ENCODE measurements at regions of chr13 and their contacts with region 1.

Region 1: GRCh38 chr13:98576963-98577822 is at the start of gene STK24:
- DNase-seq: peak; percentile 73 to 92 (median 91)
- ATAC-seq: peak; percentile 82 to 91
- H3K4me3 ChIP-seq: peak within 1 kb of the TSS; percentile 77
- H3K27ac ChIP-seq: peak within 1 kb of the TSS; percentile 99
- H3K4me1 ChIP-seq: peaks cover 2% of the 10 kb centered on the region
- H3K27me3 ChIP-seq: no peaks in the 10 kb centered on the region
- total RNA-seq, gene STK24: 60.5 to 66.9 (median 62.7) TPM

Region 2: DNA sequence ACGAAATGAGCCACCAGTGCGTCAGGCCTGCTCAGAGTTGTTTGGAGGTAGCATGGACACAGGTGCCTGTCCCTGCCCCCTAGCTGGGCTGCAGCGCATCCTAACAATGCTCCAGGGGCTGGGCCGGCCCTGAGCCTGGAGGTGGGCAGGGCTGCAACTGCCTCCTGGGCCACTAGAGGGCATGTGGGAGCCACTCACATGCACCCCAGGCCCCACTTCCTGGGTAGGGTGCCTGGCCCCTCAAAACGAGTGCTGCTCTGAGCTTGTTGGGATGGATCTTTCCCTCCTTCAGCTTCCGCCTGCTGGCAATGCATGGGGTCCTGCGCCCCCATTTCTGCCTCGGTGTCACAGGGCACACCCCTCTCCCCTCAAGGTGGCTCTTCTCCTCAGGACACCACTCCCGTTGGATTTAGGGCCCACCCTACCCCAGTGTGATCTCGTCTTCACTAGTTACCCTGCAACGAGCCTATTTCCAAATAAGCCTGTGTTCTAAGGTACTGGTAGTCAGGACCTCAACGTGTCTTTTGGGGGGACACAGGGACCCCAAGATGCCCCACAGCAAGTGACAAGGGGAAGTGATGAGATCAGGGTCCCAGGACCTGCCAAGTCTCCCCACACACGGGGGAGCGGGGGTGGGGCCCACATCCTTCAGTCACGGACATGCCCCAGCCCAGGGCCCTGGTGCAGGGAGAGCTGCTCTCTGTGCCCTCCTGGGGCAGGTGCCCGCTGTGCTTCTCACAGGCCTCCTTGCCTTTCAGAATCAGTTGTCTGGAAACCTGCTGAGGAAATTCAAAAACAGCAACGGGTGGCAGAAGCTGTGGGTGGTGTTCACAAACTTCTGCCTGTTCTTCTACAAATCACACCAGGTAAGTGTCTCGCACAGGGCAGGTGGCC is 131.6 kb before region 1 on chr13:
- intact Hi-C with region 1: loop called in 2 of 4 experiments (anchors 5 to 10 kb)
- DNase-seq: peak; percentile 64 to 90 (median 87)
- ATAC-seq: peak; percentile 81 to 85
- H3K4me3 ChIP-seq: no peak overlapping the region
- H3K27ac ChIP-seq: no peak overlapping the region
- H3K4me1 ChIP-seq: peaks cover 3% of the 10 kb centered on the region
- H3K27me3 ChIP-seq: no peaks in the 10 kb centered on the region

Region 3: DNA sequence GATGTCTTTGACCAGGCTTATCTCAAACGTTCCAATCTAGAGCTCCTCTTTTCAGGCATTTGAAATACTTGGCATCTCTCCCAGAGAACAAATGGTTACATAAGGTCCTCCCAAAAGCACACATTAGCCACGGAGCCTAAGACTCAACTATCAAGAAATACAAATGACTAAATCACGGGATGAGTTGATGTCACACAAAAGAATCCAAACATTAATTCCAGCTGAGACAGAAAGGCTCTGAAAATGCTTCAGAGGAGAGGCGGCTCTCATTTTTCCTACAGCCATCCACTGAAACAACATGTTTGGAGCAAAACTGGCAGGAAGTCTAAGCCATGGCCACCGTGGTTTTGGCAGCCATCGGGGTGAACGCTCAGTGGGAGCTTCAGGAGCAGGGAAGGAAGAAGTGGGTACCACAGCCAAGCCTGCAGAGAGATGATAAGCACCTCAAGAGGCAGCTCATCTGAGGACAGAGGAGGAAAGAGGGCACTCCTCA is 122.8 kb before region 1 on chr13:
- intact Hi-C with region 1: loop called in 2 of 4 experiments (anchors 5 to 10 kb)
- DNase-seq: peak in 1 of 3 donors; percentile 57
- ATAC-seq: peak; percentile 63 to 69
- H3K4me3 ChIP-seq: no peak overlapping the region
- H3K27ac ChIP-seq: peak overlapping the region; percentile 92
- H3K4me1 ChIP-seq: peaks cover 11% of the 10 kb centered on the region
- H3K27me3 ChIP-seq: no peaks in the 10 kb centered on the region

Region 4: DNA sequence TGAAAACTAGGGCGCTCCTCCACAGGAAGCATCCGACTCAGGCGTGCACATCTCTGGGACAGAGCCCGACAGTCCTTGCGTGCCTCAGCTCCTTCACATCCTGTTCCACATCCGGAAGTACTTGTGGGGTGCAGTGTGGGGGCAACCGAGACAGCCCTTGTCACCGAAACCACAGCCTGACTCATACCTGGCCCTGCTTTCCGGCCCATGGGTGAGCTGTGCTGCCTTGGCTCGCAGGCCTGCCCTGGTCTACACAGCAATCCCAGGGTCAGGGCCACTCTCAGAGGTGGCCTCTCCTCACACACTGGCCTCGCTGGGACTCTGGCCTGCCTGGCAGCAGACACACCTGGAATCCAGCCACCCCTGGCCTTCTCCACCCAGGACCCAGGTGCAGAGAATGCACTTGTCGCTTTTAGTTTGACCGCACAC is 100.6 kb before region 1 on chr13:
- intact Hi-C with region 1: loop called in 3 of 4 experiments (anchors 10 kb)
- DNase-seq: peak in 2 of 3 donors; percentile 56 to 76
- ATAC-seq: peak; percentile 53 to 74
- H3K4me3 ChIP-seq: no peak overlapping the region
- H3K27ac ChIP-seq: peak overlapping the region; percentile 38
- H3K4me1 ChIP-seq: peaks cover 18% of the 10 kb centered on the region
- H3K27me3 ChIP-seq: no peaks in the 10 kb centered on the region

Region 5: DNA sequence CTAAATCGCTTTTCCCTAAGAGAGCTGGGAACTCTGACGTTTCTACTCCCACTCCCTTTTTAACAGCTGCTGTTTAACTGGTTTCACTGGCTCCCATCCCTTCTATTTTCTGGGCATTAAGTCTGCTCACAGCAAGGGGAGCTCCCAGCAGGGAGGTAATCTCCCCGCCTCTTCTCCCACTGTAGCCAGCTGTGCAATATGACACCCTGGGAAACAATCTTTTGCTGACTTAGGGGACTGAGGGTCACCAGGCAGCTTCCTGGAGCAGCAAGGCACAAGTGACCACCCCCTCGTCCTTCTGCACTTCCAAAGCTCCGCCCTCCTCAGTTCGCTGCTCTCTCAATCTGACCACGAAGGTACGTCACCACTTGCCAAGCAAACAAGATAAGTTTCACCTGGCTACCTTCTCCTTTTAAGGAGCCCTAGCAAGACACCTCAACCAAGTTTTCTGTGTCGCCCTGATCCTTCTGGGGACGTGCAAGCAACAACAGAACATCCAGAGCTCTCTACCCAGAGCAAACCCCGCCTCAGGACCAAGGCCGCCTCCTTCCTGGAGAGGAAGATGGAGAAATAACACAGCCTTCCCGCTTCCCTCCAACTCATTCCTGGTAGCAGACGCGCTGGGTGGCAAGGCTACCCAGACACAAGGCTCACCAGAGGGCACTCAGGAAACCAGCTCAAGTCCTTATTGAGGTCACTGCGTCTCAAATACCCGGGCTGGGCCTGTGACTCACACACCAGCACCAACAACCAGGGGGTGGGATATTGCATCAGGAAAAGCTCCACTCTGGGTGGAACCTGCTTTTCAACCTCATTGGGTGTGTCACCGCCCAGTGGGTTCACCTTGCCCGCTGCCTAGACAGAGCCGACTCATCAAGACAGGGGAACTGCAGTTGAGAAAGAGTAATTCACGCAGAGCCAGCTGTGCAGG is 92.6 kb before region 1 on chr13:
- intact Hi-C with region 1: loop called in 3 of 4 experiments (anchors 10 kb)
- DNase-seq: peak; percentile 72 to 75 (median 73)
- ATAC-seq: peak; percentile 75 to 83
- H3K4me3 ChIP-seq: no peak overlapping the region
- H3K27ac ChIP-seq: peak overlapping the region; percentile 54
- H3K4me1 ChIP-seq: peaks cover 33% of the 10 kb centered on the region
- H3K27me3 ChIP-seq: no peaks in the 10 kb centered on the region

Region 6: GRCh38 chr13:98653463-98653985 is 76.3 kb after region 1 on chr13:
- intact Hi-C with region 1: loop called in 1 of 4 experiments (anchors 2 kb)
- DNase-seq: peak; percentile 77 to 91 (median 85)
- ATAC-seq: peak; percentile 86 to 87
- H3K4me3 ChIP-seq: no peak overlapping the region
- H3K27ac ChIP-seq: no peak overlapping the region
- H3K4me1 ChIP-seq: no peaks in the 10 kb centered on the region
- H3K27me3 ChIP-seq: no peaks in the 10 kb centered on the region